Activated CD4-positive, alpha-beta T cell treated with anti-CD3 and anti-CD28 coated beads for 36 hours (primary cell): ENCODE measurements at regions of chr20 and their contacts with region 1.

Region 1: GRCh38 chr20:53660078-53660909 is 66.7 kb upstream of the ZNF217 start:
- DNase-seq: peak; percentile 69
- ATAC-seq: peak; percentile 61
- H3K4me3 Mint-ChIP-seq: peak overlapping the region; percentile 74
- H3K27ac Mint-ChIP-seq: peak overlapping the region; percentile 93
- H3K4me1 Mint-ChIP-seq: peaks cover 69% of the 10 kb centered on the region
- H3K27me3 Mint-ChIP-seq: no peaks in the 10 kb centered on the region

Region 2: DNA sequence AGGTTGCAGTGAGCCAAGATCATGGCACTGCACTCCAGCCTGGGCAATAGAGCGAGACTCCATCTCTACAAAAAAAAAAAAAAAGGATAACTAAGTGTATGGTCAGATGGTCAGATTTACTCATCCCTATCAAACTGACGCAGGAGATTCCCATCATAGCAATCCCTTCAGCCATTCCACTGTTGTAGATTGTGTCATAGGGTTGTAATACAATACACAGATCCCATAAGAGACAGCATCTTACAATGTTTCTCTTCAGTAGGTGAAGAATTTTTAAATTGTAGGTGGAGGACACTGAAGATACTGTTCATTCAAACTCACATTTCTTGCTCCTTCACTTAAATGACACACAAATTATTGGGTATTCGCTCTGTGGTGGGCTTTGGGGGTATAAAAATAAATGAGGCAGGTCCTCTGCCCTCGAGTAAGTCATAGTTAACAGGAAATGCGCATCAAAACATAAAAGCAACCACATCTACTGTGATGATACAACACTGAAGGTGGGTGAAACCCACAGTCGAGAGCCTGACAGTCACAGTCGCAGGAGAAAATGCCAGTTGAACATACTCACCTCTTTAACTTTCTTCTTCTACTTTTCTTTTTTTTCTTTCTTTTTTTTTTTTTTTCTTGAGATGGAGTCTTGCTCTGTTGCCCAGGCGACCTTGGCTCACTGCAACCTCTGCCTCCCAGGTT is 272.2 kb before region 1 on chr20:
- CTCF ChIA-PET with region 1: no interaction called
- POLR2A ChIA-PET with region 1: no interaction called
- intact Hi-C with region 1: no loop called
- DNase-seq: peak; percentile 52
- ATAC-seq: peak; percentile 99
- H3K4me3 Mint-ChIP-seq: no peak overlapping the region
- H3K27ac Mint-ChIP-seq: peak overlapping the region; percentile 26
- H3K4me1 Mint-ChIP-seq: peaks cover 31% of the 10 kb centered on the region
- H3K27me3 Mint-ChIP-seq: no peaks in the 10 kb centered on the region

Region 3: DNA sequence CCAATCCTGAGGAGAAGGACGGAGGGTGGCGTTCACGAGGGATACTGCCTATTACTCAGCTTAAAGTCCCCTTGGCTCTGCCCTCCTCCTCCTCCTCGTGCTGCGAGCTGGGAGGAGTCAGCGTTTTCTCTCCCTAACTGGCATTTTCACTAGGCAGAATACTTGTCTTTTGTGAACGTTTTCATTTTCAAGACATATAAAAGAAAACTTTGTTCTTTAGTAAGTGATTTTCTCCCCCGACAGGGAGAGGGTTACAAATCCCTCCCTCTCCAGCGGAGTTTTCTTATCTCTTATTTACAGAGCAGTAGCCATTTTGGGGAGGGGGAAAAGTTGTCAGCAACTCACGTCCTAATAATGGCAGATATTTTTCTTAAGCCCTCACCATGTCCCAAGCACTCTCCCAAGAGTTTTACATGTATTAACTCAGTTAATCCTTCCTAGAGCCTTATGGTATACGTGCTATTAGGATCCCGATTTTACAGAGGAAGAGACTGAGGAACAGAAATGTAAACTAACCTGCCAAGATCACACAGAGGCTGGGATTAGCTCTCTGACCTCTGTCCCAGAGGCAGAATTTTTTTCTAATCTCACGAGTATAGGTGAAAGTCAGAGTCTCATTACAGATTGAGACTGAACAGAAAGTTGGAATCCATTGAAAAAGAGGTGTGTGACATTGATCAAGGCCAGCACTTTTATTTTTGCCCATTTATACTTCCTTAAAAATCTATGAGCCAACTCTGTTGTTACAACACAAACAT is 36.7 kb before region 1 on chr20:
- CTCF ChIA-PET with region 1: interaction called, 4 read pairs
- POLR2A ChIA-PET with region 1: interaction called, 3 read pairs
- intact Hi-C with region 1: loop called in 1 of 2 experiments (anchors 5 kb)
- DNase-seq: peak; percentile 65
- ATAC-seq: peak; percentile 78
- H3K4me3 Mint-ChIP-seq: peak overlapping the region; percentile 67
- H3K27ac Mint-ChIP-seq: peak overlapping the region; percentile 97
- H3K4me1 Mint-ChIP-seq: peaks cover 37% of the 10 kb centered on the region
- H3K27me3 Mint-ChIP-seq: no peaks in the 10 kb centered on the region

Region 4: DNA sequence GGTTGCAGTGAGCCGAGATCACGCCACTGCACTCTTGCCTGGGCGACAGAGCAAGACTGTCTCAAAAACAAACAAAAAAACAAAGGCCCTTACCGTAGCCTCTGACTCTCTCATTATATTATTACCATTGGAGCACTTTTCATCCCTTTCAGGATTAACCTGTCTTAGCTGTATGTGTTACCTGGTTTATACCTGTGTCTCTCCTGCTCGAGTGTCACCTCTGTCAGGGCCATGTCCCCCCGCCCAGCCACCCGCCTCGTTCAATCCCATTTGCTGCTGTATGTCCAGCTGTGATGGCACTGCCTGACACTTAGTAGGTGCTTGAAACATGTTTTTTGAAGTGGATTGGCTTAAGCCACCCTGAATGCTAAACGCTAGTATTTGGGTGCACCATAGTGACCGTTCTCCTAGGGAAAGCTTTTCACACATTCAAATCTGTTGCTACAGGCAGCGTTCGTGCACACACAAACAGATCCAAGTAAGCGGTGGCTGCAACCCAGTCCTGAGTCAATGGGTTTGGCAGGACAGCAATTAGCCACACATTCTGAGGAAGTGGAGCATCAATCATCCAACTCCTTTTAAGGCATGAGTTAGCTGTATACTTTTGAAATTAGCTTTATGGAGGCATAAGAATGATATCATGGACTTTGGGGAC is 32.2 kb after region 1 on chr20:
- CTCF ChIA-PET with region 1: no interaction called
- POLR2A ChIA-PET with region 1: no interaction called
- intact Hi-C with region 1: loop called (anchors 2 kb)
- DNase-seq: peak; percentile 24
- ATAC-seq: peak; percentile 30
- H3K4me3 Mint-ChIP-seq: peak overlapping the region; percentile 39
- H3K27ac Mint-ChIP-seq: no peak overlapping the region
- H3K4me1 Mint-ChIP-seq: peaks cover 31% of the 10 kb centered on the region
- H3K27me3 Mint-ChIP-seq: no peaks in the 10 kb centered on the region